ENCODE measurements at regions of chr2 and their contacts with region 1.

Region 1: GRCh38 chr2:33372940-33373553 is 103.4 kb upstream of the RASGRP3 start:
- DNase-seq: peak; percentile 61 to 77
- ATAC-seq: peak in 1 of 2 experiments; percentile 75; a peak in 3 of 6 replicates
- H3K4me3 ChIP-seq: no peak overlapping the region
- H3K27ac ChIP-seq: peak overlapping the region in 1 of 2 experiments; percentile 28; a peak in 2 of 6 replicates
- H3K4me1 ChIP-seq: peaks cover 7% of the 10 kb centered on the region; the same call in 2 of the 3 replicates
- CTCF ChIP-seq: peak; percentile 96
- EP300 ChIP-seq: no peak
- POLR2A ChIP-seq: no peak
- RAD21 ChIP-seq: peak; percentile 94

Region 2: GRCh38 chr2:33275689-33276444 is 97.2 kb before region 1 on chr2:
- CTCF ChIA-PET with region 1: interaction called, 10 read pairs
- POLR2A ChIA-PET with region 1: no interaction called
- DNase-seq: peak; percentile 93 to 94
- ATAC-seq: peak; percentile 96 to 100
- H3K4me3 ChIP-seq: no peak overlapping the region
- H3K27ac ChIP-seq: peak overlapping the region; percentile 61 to 79
- H3K4me1 ChIP-seq: peaks cover 41% of the 10 kb centered on the region
- CTCF ChIP-seq: no peak
- EP300 ChIP-seq: peak; percentile 80 to 86; a peak in 3 of 5 replicates
- POLR2A ChIP-seq: no peak
- RAD21 ChIP-seq: peak; percentile 5 to 42; a peak in 3 of 5 replicates

Region 3: GRCh38 chr2:33354981-33355380 is 18.1 kb before region 1 on chr2:
- CTCF ChIA-PET with region 1: interaction called, 14 read pairs
- POLR2A ChIA-PET with region 1: no interaction called
- DNase-seq: no peak
- ATAC-seq: no peak
- H3K4me3 ChIP-seq: no peak overlapping the region
- H3K27ac ChIP-seq: no peak overlapping the region
- H3K4me1 ChIP-seq: no peaks in the 10 kb centered on the region
- CTCF ChIP-seq: no peak
- EP300 ChIP-seq: no peak
- POLR2A ChIP-seq: no peak
- RAD21 ChIP-seq: no peak

Region 4: DNA sequence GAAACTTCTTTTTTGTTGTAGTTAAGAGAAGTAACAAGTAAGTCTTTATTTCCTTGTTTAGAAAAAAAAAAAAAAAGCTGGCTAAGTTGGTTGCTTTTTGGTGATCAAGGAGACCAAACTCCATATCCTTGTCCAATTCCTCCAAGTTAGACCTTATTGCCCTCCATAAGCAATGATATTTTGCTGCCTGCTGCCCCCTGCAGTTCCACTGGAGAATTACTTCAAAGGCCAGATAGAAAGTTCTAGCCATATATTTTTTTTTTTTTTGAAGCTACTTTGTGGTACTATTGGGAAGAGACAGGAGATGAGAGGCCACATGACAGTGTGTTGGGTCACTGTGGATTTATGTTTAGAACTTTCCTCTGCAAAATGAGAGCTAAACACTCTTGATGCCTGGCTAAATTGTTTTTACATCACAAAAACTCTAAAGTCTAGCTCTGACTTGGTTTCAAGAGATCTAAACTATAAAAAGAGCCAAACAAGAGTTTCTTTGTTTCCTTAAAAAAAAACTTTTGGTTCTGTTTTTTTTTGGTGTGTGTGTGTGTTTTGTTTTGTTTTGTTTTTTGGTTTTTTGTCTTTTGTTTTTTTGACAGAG is 22.7 kb after region 1 on chr2:
- CTCF ChIA-PET with region 1: interaction called, 10 read pairs
- POLR2A ChIA-PET with region 1: no interaction called
- DNase-seq: peak; percentile 26 to 78
- ATAC-seq: peak; percentile 62 to 85; a peak in 3 of 6 replicates
- H3K4me3 ChIP-seq: no peak overlapping the region
- H3K27ac ChIP-seq: no peak overlapping the region
- H3K4me1 ChIP-seq: peaks cover 5% of the 10 kb centered on the region; the same call in 1 of the 3 replicates
- CTCF ChIP-seq: peak; percentile 62
- EP300 ChIP-seq: no peak
- POLR2A ChIP-seq: no peak
- RAD21 ChIP-seq: peak; percentile 71 to 80

Region 5: GRCh38 chr2:33441235-33441810 is 68.3 kb after region 1 on chr2:
- CTCF ChIA-PET with region 1: interaction called, 11 read pairs
- POLR2A ChIA-PET with region 1: no interaction called
- DNase-seq: peak; percentile 59 to 80
- ATAC-seq: peak; percentile 98
- H3K4me3 ChIP-seq: no peak overlapping the region
- H3K27ac ChIP-seq: peak overlapping the region in 1 of 2 experiments; percentile 10; a peak in 1 of 6 replicates
- H3K4me1 ChIP-seq: no peaks in the 10 kb centered on the region; the same call in 2 of the 3 replicates
- CTCF ChIP-seq: peak; percentile 93
- EP300 ChIP-seq: no peak
- POLR2A ChIP-seq: no peak
- RAD21 ChIP-seq: peak; percentile 95 to 98

Region 6: DNA sequence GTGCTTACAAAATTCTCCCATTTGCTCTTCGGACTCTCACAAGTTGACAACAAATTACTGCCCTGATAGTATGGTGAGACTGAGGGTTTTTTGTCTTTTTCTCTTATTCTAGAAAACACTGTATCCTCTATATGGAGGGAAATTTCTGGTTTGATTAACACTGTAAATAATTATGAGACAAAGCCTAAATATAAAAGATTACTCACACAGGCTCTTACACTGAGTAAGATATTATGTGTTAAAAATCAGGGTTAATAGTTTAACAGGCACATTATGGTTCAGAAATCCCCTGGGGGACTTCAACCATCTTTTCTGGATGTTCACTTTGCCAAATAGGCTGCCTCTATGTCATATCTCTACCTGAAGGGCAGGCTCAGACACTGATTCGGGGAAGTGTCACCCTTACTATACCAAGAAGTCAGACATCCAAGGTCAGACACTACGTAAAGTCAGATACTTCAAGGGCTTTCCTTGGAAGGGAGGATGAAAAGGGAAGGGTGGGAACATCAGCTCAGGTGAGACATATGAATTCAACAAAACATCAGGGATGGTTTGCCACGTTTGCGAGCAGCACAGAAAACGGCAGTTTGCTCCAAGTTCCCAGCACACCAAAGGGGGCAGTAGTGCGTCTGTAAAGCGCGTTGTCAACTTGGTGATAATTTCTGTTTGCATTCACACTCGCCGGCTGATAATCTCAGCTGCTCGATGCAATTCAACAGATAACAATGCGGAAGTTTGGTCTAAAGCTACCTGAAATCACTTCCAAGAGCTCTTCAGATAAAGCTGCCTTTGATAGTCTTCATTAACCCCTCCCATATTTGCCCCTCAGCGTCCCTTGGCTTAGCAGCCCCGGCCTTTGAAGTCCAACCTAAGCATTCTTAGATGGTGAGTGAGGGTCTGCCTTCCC is 102.4 kb after region 1 on chr2:
- CTCF ChIA-PET with region 1: no interaction called
- POLR2A ChIA-PET with region 1: no interaction called
- DNase-seq: peak; percentile 78 to 87
- ATAC-seq: peak; percentile 87 to 90
- H3K4me3 ChIP-seq: peak overlapping the region; percentile 57
- H3K27ac ChIP-seq: peak overlapping the region; percentile 51 to 76
- H3K4me1 ChIP-seq: peaks cover 5% of the 10 kb centered on the region; the same call in 2 of the 3 replicates
- CTCF ChIP-seq: peak; percentile 80
- EP300 ChIP-seq: no peak
- POLR2A ChIP-seq: no peak
- RAD21 ChIP-seq: peak; percentile 67 to 71